ENCODE measurements at regions of chr10 and their contacts with region 1.

Region 1: GRCh38 chr10:124388823-124389612 is 29.7 kb downstream of the OAT start:
- DNase-seq: peak; percentile 84
- H3K4me3 ChIP-seq: peak overlapping the region; percentile 36 to 37
- H3K27ac ChIP-seq: no peak overlapping the region
- H3K4me1 ChIP-seq: no peaks in the 10 kb centered on the region
- H3K27me3 ChIP-seq: no peaks in the 10 kb centered on the region
- CTCF ChIP-seq: peak; percentile 96 to 99 (median 98)
- POLR2A ChIP-seq: peak; percentile 7

Region 2: DNA sequence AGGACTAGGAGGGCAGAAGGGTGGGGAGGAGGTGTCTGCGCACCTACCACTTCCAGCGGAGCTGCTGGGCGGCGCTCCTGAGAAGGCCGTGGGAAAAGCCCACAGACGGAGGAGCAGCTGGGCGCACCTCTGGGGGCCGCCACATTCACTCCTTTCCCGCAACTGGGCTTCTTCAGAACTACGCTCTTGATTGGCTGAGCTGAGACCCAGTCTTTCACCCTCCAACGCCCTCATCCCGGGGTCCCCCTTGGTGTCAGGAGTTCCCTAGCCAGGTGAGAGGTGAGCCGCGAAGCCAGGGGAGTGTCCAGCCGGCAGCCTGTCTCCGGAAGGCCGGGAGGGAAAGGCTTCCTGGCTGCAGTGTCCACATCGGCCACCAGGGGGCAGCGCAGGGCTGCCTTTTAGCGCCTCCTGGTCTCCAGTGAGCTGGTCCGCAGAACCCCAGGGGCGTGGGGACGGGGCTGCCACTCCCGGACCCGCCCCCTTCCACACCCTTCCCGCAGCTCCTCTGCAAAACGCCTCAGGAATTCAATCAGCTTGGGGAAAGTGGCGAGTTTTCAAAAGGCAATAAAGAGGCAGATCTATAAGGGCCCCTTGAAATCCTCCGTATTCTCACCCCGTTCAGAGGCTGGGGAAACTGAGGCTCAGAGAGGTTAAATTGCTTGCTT is 394.5 kb before region 1 on chr10:
- intact Hi-C with region 1: loop called (anchors 1 kb)
- DNase-seq: peak; percentile 80
- H3K4me3 ChIP-seq: no peak overlapping the region
- H3K27ac ChIP-seq: no peak overlapping the region
- H3K4me1 ChIP-seq: no peaks in the 10 kb centered on the region
- H3K27me3 ChIP-seq: peaks cover 7% of the 10 kb centered on the region
- CTCF ChIP-seq: peak; percentile 97 to 99 (median 98)
- POLR2A ChIP-seq: no peak

Region 3: DNA sequence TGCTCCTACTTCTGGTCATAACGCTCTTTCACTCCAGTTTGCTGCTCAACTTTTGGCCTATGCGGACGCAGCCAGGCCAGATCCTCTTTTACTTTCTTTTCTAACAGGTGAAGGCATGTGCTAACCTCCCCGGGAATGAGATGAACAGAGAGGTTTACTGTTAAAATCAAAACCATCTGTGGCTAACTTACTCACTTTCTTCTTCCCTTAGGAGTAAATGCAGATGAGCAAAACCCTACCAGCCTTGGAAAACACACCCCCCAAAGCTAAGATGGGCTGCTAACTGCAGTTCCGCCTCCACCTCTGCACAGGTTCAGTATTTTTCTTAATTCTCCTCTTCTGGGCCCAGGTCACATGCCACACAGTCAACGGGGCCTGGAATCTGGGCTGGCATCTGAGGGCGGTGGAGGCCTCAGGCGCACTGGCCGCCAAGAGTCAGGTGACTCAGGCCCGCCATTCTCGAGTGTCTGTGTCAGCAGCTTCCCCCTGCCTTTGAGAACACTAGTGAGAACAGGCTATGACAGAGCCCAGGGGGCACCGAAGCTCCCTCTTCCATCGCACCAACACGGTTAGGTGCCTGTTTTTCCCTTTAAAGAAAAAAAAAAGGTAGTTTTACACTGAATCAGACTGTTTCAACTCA is 344.0 kb after region 1 on chr10:
- intact Hi-C with region 1: no loop called
- DNase-seq: no peak
- H3K4me3 ChIP-seq: no peak overlapping the region
- H3K27ac ChIP-seq: peak overlapping the region; percentile 58 to 67
- H3K4me1 ChIP-seq: peaks cover 16% of the 10 kb centered on the region
- H3K27me3 ChIP-seq: no peaks in the 10 kb centered on the region
- CTCF ChIP-seq: no peak
- POLR2A ChIP-seq: no peak